ENCODE measurements at regions of chr6 and their contacts with region 1.

Region 1: DNA sequence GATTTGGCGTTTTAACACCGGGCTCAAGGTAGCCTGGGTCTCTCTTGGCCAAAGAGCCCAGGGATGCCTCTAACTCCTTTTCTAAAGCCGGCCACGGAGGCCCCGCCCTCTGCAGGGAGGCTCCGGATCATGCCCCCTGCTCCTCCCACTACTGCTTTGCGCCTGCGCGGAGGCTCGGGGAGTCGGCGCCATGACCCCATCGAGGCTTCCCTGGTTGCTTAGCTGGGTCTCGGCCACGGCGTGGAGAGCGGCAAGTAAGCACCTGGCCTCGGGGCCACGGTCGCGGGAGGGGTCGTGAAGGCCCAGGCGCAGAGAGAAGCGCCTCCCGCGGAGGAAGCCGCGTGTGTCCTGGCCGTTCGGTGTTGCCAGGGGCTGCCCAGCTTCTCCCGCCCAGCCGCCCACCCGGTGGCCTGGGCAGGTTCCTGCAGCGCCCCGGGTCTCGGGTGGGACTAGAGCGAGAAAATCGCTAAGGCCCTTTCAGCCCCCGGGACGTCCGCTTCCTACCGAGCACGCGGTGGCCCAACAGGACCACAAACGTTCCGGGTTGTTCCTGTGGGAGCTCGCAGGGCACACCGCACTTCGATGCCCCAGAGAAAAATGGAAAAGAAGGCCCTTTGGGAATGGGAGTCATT is at the start of gene SDHAF4:
- DNase-seq: peak; percentile 93 to 97
- ATAC-seq: peak; percentile 99
- H3K4me3 ChIP-seq: peak within 1 kb of the TSS; percentile 64
- H3K4me3 Mint-ChIP-seq: peak within 1 kb of the TSS; percentile 91
- H3K27ac ChIP-seq: peak within 1 kb of the TSS; percentile 74
- H3K27ac Mint-ChIP-seq: peak within 1 kb of the TSS; percentile 54 to 84
- H3K4me1 ChIP-seq: peaks cover 15% of the 10 kb centered on the region
- H3K4me1 Mint-ChIP-seq: peaks cover 5 to 10% of the 10 kb centered on the region in 2 donors
- H3K27me3 ChIP-seq: no peaks in the 10 kb centered on the region
- H3K27me3 Mint-ChIP-seq: peaks cover 8% of the 10 kb centered on the region in 2 donors
- CTCF ChIP-seq: no peak
- total RNA-seq, gene SDHAF4: 2.7 to 7.1 (median 5.4) TPM

Region 2: DNA sequence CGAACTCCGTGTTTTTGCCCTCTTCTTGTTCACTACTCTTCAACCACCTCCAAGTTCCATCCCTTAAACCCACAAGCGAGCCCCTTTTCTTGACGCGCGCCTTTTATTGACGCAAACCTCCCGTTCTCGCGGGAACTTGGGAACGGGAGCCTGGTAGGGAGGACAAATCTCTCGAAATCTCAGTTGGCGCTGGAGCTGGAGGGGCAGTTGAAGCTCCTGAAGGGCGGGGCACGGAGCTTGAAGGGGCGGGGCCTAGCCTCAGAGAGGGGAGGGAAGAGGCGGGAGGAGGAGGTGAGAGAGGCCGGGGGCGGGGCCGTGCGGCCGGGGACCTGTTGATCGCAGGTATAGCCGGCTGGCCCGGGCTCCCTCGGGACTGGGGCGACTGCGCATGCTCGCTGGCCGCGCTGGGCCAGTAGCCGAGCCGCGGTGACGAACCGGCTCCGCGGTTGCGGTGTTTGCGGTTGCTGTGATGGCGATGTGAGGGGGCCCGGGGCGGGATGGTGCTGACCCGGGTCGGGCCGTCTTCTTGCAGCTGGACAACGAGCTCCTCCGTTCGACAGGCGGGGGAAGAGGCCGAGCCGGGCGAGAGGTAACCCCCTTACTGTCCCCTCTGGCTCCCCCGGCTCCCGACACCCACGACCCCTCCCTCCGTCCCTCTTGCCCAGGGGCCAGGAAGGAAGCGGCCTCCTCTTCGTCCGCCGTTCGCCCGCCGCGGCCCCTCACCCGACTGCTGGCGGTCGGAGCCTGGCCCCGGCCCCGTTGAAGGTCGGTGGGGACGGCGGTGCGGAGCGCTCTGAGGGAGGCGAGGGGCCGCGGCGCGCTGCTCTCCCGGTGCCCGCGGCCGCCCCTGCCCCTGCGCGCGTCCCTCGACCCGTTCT is 153.5 kb before region 1 on chr6 and contains the start of gene FAM135A:
- intact Hi-C with region 1: loop called (anchors 1 kb)
- DNase-seq: peak; percentile 78 to 95
- ATAC-seq: peak; percentile 92 to 96 (median 92)
- H3K4me3 ChIP-seq: peak within 1 kb of the TSS; percentile 60
- H3K4me3 Mint-ChIP-seq: peak within 1 kb of the TSS; percentile 93
- H3K27ac ChIP-seq: peak within 1 kb of the TSS; percentile 17
- H3K27ac Mint-ChIP-seq: peak within 1 kb of the TSS; percentile 71 to 90
- H3K4me1 ChIP-seq: peaks cover 11% of the 10 kb centered on the region
- H3K4me1 Mint-ChIP-seq: peaks cover 17 to 19% of the 10 kb centered on the region in 2 donors
- H3K27me3 ChIP-seq: no peaks in the 10 kb centered on the region
- H3K27me3 Mint-ChIP-seq: peaks cover 15 to 16% of the 10 kb centered on the region in 2 donors
- CTCF ChIP-seq: no peak
- total RNA-seq, gene FAM135A: 4.8 to 9.3 (median 5.0) TPM

Region 3: DNA sequence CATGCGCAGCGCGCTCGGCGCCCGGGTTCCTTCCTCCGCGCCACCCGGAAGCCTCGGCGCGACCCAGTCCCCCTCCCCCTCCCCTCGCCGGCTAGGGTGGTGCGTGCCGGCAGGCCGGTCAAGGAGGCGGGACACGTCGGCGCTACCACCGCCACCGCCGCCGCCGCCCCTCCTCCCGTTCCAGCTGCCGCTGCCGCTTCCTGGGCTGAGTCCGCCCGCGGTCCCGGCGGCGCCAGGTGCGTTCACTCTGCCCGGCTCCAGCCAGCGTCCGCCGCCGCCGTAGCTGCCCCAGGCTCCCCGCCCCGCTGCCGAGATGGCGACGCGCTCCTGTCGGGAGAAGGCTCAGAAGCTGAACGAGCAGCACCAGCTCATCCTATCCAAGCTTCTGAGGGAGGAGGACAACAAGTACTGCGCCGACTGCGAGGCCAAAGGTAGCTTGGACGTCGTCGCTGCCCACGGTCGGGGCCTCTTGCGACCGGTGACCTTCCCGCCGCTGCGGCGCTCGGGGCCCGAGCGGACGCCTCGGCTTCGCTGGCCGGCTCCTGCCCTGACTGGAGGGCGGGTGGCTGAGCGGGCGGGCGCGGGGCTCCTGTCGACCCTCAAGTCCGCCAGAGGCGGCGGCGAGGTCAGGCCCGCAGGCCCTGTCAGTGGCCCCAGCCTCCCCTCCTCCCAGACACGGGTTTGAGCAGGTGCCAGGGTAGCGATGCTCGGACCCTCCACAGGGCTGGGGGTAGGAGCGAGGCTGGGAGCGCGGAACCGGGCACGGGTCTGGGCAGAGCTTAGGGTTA is 101.0 kb after region 1 on chr6 and contains the start of gene SMAP1:
- intact Hi-C with region 1: loop called (anchors 1 kb)
- DNase-seq: peak; percentile 87 to 96
- ATAC-seq: peak; percentile 95 to 97 (median 97)
- H3K4me3 ChIP-seq: peak within 1 kb of the TSS; percentile 93
- H3K4me3 Mint-ChIP-seq: peak within 1 kb of the TSS; percentile 93
- H3K27ac ChIP-seq: peak within 1 kb of the TSS; percentile 84
- H3K27ac Mint-ChIP-seq: peak within 1 kb of the TSS; percentile 92 to 93
- H3K4me1 ChIP-seq: peaks cover 12% of the 10 kb centered on the region
- H3K4me1 Mint-ChIP-seq: peaks cover 46 to 56% of the 10 kb centered on the region in 2 donors
- H3K27me3 ChIP-seq: no peaks in the 10 kb centered on the region
- H3K27me3 Mint-ChIP-seq: peaks cover 7 to 10% of the 10 kb centered on the region in 2 donors
- CTCF ChIP-seq: no peak
- total RNA-seq, gene SMAP1: 28.6 to 35.4 (median 30.6) TPM

Measured in natural killer cell (primary cell).